ENCODE measurements at regions of chr11 and their contacts with region 1.

Region 1: GRCh38 chr11:65919146-65920033 is at the start of gene DRAP1:
- DNase-seq: peak; percentile 100
- H3K4me3 ChIP-seq: peak within 1 kb of the TSS; percentile 90 to 92
- H3K27ac ChIP-seq: peak within 1 kb of the TSS; percentile 87 to 97
- H3K4me1 ChIP-seq: peaks cover 32 to 43% of the 10 kb centered on the region in 2 experiments; a peak in 3 of 4 replicates
- H3K27me3 ChIP-seq: no peaks in the 10 kb centered on the region
- CTCF ChIP-seq: no peak
- EP300 ChIP-seq: peak in 1 of 2 experiments; percentile 29; a peak in 1 of 4 replicates
- RAD21 ChIP-seq: 0 out of 2 replicates have a peak, but pooled peaks have one; percentile 2
- polyA plus RNA-seq, gene DRAP1: 309 and 464 TPM in 2 replicates

Region 2: DNA sequence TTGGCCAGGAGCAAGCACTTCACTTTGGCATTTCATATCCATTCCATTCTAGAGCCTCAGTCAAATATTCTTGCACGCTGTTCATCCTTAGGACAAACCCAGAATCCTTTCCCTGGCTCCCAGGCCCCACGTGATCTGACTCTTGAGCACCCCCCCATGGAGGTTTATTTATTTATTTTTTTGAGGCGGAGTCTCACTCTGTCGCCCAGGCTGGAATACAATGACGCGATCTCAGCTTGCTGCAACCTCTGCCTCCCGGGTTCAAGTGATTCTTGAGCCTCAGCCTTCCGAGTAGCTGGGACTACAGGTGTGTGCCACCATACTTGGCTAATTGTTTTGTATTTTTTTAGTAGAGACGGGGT is 13.1 kb after region 1 on chr11:
- CTCF ChIA-PET with region 1: interaction called, 22 read pairs
- POLR2A ChIA-PET with region 1: no interaction called
- DNase-seq: no peak
- H3K4me3 ChIP-seq: no peak overlapping the region
- H3K27ac ChIP-seq: no peak overlapping the region
- H3K4me1 ChIP-seq: peaks cover 0 to 3% of the 10 kb centered on the region in 2 experiments; a peak in 1 of 4 replicates
- H3K27me3 ChIP-seq: no peaks in the 10 kb centered on the region
- CTCF ChIP-seq: no peak; the same call in 1 of the 2 replicates
- EP300 ChIP-seq: no peak
- RAD21 ChIP-seq: no peak